ENCODE measurements at regions of chr6 and their contacts with region 1.

Region 1: GRCh38 chr6:98845211-98846020 is 11.0 kb downstream of the POU3F2 start:
- DNase-seq: peak; percentile 90
- H3K4me3 Mint-ChIP-seq: peak overlapping the region; percentile 68
- H3K27ac Mint-ChIP-seq: peak overlapping the region; percentile 52
- H3K4me1 Mint-ChIP-seq: peaks cover 10% of the 10 kb centered on the region
- H3K27me3 Mint-ChIP-seq: peaks cover 80% of the 10 kb centered on the region

Region 2: GRCh38 chr6:97705568-97705967 is 1139.8 kb before region 1 on chr6:
- intact Hi-C with region 1: loop called (anchors 10 kb)
- DNase-seq: no peak
- H3K4me3 Mint-ChIP-seq: no peak overlapping the region
- H3K27ac Mint-ChIP-seq: no peak overlapping the region
- H3K4me1 Mint-ChIP-seq: no peaks in the 10 kb centered on the region
- H3K27me3 Mint-ChIP-seq: no peaks in the 10 kb centered on the region

Region 3: DNA sequence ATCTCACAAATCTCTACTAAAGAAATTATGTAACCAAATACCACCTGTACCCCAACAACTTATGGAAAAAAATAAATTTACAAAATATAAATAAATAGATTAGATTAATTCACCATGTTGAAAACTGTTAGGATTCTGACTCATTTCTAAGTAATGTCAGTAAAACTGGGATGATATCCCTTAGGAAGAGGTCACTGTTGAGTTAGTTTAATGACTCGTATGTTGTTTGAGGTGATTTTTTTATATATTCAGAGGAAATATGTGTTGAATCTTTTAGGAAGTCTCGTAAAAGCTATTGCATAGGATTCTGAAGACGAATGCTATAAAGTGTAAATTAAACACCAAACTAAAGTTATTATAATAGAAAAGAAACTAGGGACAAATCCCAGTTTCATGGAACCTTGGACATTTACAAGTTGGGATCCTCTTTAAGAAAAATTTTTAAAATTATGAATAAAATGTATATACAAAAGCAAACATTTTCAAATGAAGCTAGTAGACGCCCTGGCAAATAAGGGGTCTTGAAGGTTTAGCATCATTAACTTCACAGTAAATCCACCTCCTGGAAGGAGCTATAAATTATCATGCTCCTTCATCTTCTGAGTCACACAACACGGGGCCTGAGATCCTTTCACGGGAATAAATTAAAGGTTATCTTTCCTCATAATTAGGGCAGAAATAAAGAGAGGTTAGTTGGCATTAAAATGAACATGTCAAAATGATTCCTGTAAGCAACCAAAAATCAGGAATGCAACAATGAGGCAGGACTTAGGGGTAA is 48.0 kb before region 1 on chr6:
- intact Hi-C with region 1: no loop called
- DNase-seq: no peak
- H3K4me3 Mint-ChIP-seq: no peak overlapping the region
- H3K27ac Mint-ChIP-seq: no peak overlapping the region
- H3K4me1 Mint-ChIP-seq: no peaks in the 10 kb centered on the region
- H3K27me3 Mint-ChIP-seq: peaks cover 12% of the 10 kb centered on the region

Region 4: DNA sequence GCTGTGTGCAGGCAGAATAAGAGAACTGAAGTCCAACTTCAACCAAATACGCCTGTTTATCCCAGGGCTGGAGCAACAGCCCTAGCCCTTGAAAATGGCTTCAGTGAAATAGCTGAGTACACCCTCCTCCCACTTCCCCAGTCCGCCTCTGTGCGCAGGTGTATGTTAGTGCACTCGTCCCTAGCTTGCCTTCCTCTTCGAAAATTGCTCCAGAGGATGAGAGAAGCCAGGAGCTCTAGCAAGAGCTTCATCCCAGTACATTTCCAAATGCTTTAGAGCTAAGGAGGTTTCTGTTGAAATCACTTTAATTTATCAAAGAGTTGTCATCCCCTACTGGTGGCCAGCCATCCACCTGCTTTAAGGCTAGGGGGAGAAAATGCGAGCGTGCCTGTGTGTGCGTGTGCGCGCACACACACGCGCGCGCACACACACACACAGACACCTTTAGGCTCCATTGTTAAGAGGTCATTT is 16.4 kb before region 1 on chr6:
- intact Hi-C with region 1: loop called (anchors 1 kb)
- DNase-seq: peak; percentile 57
- H3K4me3 Mint-ChIP-seq: no peak overlapping the region
- H3K27ac Mint-ChIP-seq: no peak overlapping the region
- H3K4me1 Mint-ChIP-seq: peaks cover 37% of the 10 kb centered on the region
- H3K27me3 Mint-ChIP-seq: peaks cover 89% of the 10 kb centered on the region

Region 5: GRCh38 chr6:98834060-98835031 is 11.1 kb before region 1 on chr6 and contains the start of gene POU3F2:
- intact Hi-C with region 1: loop called (anchors 1 kb)
- DNase-seq: peak; percentile 84
- H3K4me3 Mint-ChIP-seq: peak within 1 kb of the TSS; percentile 81
- H3K27ac Mint-ChIP-seq: peak within 1 kb of the TSS; percentile 67
- H3K4me1 Mint-ChIP-seq: peaks cover 29% of the 10 kb centered on the region
- H3K27me3 Mint-ChIP-seq: peaks cover 78% of the 10 kb centered on the region
- total RNA-seq, gene POU3F2: not detected in 2 replicates

Region 6: DNA sequence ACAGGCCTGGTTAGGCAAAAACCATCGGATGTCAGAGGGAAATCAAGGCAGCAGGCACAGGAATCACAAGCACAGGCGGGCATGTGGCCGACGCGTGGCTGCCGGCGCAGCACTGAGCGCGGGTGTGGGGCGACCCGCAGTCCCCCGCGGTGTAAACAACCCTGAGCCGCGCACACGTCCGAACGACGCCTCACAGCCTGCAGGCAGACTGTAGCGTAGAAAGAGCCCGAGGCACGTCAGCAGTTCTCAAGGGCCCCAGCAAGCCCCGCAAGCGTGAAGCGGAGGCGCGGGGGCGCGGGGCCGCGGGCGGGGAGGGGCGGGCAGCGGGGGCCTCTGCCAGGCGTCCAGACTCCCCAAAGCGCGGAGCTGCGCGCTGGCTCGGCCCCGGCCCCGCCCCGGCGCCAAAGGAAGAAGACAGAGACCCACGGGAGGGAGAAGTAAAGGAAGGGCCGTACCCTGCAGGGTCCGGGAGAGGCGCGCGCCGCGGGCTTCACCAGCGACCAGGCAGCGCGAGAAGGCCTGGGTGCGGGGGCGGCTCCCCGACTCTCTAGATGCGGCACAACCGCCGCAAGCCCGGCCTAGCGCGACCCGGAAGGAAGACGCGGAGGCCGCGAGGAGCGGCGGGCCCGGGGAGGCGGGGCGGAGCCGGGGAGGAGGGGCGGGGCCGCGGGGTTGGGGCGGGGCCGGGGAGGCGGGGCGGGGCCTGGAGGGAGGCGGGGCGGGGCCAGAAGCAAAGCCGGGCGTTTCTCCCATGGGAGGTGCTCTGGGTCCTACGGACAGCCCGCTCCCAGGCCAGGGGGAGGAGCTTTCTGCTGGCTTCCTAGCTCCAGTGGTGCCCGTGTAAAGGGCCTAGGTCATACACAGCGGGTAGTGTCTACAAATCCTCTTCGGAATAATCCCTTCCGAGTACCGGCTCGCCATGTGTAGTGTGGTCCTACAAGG is 102.2 kb after region 1 on chr6 and contains the start of gene FBXL4:
- intact Hi-C with region 1: loop called (anchors 5 kb)
- DNase-seq: peak; percentile 94
- H3K4me3 Mint-ChIP-seq: peak within 1 kb of the TSS; percentile 97
- H3K27ac Mint-ChIP-seq: peak within 1 kb of the TSS; percentile 98
- H3K4me1 Mint-ChIP-seq: peaks cover 32% of the 10 kb centered on the region
- H3K27me3 Mint-ChIP-seq: peaks cover 27% of the 10 kb centered on the region
- total RNA-seq, gene FBXL4: 12.8 and 15.3 TPM in 2 replicates

Region 7: DNA sequence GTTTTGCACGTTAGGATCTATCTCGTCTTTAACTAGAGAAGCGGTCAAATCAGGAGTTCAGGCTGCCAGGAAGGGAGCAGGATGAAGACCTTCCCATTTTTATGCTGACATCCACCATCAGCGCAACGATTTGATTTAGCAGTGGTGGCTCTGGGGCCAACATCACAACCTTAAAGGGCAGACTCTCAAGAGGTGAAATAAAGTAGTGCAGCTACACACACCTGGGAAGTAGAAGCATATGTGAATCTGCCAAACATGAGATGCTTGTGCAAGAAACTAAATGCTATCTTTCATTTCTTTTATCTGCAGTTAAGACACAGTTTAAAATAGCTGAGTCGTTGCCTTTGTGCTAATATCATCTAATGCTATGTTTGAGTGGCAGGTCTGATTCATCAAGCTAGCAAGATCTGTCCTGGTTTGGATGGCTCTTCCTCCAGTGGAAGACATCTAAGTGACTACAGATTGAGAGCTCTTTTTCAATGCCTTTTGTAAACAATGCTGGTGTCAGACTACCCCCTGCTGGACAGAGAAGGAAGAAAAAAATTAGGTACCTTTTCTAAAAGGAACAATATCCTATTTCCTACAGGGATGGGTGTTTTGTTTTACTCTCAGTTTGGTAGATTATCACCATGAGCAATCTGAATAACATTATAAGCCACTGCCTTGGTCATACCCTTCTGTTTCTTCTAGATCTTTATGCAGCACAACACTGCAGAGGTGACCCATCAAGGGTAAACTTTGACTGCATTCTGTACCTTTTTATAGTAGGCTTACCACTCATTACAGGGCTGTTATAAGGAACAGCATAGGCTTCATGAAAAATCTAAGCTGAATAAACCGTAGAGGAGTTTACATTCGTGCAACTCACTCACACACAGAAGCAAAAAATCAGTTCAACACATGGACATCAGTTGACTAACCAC is 274.0 kb after region 1 on chr6:
- intact Hi-C with region 1: loop called (anchors 2 kb)
- DNase-seq: peak; percentile 76
- H3K4me3 Mint-ChIP-seq: no peak overlapping the region
- H3K27ac Mint-ChIP-seq: no peak overlapping the region
- H3K4me1 Mint-ChIP-seq: no peaks in the 10 kb centered on the region
- H3K27me3 Mint-ChIP-seq: peaks cover 14% of the 10 kb centered on the region

Region 8: GRCh38 chr6:99143108-99143861 is 297.9 kb after region 1 on chr6:
- intact Hi-C with region 1: no loop called
- DNase-seq: no peak
- H3K4me3 Mint-ChIP-seq: no peak overlapping the region
- H3K27ac Mint-ChIP-seq: no peak overlapping the region
- H3K4me1 Mint-ChIP-seq: no peaks in the 10 kb centered on the region
- H3K27me3 Mint-ChIP-seq: peaks cover 2% of the 10 kb centered on the region